ENCODE measurements at regions of chr7 and their contacts with region 1.

Region 1: GRCh38 chr7:20172736-20173334 is 44.3 kb downstream of the MACC1 start:
- DNase-seq: no peak
- H3K4me3 ChIP-seq: no peak overlapping the region
- H3K27ac ChIP-seq: no peak overlapping the region
- H3K4me1 ChIP-seq: peaks cover 0 to 3% (median 0%) of the 10 kb centered on the region in 4 donors
- H3K27me3 ChIP-seq: no peaks in the 10 kb centered on the region
- CTCF ChIP-seq: peak; percentile 57 to 68 (median 63)
- EP300 ChIP-seq: no peak
- POLR2A ChIP-seq: no peak

Region 2: DNA sequence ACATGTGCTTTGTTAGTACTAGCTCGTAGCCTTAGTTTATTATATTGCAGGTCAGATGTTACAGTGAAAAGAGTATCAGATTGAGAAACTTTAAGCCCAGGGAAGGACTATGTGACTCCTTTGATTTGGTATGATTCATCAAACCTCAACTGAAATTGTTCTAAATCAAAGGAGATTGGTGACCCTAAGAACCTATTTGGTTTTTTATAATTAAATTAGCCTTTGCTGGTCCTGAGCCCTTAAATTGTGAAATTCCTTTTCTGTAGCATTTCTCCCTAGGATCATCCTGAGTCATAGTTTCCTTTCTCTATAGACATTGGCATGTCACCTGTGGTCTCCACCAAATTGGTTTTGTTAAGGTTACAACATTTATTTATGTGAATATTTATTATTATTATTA is 553.7 kb before region 1 on chr7:
- intact Hi-C with region 1: no loop called
- DNase-seq: no peak
- H3K4me3 ChIP-seq: no peak overlapping the region
- H3K27ac ChIP-seq: no peak overlapping the region
- H3K4me1 ChIP-seq: no peaks in the 10 kb centered on the region
- H3K27me3 ChIP-seq: no peaks in the 10 kb centered on the region
- CTCF ChIP-seq: no peak
- EP300 ChIP-seq: no peak
- POLR2A ChIP-seq: no peak

Region 3: DNA sequence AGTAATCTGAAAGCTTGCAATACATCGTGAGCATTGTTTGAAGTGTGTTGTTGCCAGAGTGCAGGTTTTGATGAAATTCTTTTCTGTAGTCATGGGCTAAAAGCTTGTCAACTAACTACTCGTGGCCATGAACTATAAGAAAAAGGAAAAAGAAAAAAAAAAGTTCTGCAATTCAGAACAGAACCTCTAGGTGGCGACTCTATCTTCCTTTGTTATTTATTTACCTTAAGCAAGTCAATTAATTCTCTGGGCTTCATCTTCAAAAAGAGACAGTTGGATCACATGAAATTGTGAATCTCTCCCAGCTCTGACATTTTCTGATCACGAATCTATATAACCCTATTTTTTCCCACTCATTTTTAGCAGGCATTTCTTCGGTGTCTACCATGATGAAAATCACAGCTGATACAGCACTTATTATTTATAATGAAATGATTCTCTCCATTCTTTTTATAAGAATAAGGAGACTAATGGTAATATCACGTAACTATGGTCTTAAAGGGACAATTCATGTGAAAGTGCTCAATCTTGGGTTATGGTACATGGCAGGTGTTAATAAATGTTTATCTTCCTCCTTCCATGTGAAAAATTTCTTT is 418.2 kb before region 1 on chr7:
- intact Hi-C with region 1: loop called (anchors 5 kb)
- DNase-seq: no peak
- H3K4me3 ChIP-seq: no peak overlapping the region
- H3K27ac ChIP-seq: no peak overlapping the region
- H3K4me1 ChIP-seq: no peaks in the 10 kb centered on the region
- H3K27me3 ChIP-seq: no peaks in the 10 kb centered on the region
- CTCF ChIP-seq: peak; percentile 48 to 77 (median 66)
- EP300 ChIP-seq: no peak
- POLR2A ChIP-seq: no peak

Region 4: DNA sequence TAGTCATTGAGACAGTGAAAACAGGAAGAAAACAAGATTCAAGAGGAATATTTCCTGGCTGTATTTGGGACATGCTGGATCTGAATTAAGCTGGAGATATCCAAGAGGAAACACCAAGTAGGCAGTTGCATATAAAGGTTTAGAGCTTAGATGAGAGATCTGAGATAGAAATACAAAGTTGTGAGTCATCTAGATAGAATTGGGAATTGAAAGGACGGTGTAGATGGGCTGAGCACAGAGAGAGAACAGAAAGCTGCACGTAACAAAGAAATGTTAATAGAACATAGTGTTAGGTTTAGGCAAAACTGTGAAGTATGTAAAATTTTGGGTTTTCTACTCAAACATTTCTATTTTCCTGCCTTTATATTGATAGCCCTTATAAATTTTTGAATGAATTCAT is 180.9 kb before region 1 on chr7:
- intact Hi-C with region 1: loop called (anchors 10 kb)
- DNase-seq: no peak
- H3K4me3 ChIP-seq: no peak overlapping the region
- H3K27ac ChIP-seq: no peak overlapping the region
- H3K4me1 ChIP-seq: no peaks in the 10 kb centered on the region
- H3K27me3 ChIP-seq: no peaks in the 10 kb centered on the region
- CTCF ChIP-seq: no peak
- EP300 ChIP-seq: no peak
- POLR2A ChIP-seq: no peak

Measured in esophagus muscularis mucosa (tissue), 4 donors.